ENCODE measurements at regions of chr3 and their contacts with region 1.

Region 1: DNA sequence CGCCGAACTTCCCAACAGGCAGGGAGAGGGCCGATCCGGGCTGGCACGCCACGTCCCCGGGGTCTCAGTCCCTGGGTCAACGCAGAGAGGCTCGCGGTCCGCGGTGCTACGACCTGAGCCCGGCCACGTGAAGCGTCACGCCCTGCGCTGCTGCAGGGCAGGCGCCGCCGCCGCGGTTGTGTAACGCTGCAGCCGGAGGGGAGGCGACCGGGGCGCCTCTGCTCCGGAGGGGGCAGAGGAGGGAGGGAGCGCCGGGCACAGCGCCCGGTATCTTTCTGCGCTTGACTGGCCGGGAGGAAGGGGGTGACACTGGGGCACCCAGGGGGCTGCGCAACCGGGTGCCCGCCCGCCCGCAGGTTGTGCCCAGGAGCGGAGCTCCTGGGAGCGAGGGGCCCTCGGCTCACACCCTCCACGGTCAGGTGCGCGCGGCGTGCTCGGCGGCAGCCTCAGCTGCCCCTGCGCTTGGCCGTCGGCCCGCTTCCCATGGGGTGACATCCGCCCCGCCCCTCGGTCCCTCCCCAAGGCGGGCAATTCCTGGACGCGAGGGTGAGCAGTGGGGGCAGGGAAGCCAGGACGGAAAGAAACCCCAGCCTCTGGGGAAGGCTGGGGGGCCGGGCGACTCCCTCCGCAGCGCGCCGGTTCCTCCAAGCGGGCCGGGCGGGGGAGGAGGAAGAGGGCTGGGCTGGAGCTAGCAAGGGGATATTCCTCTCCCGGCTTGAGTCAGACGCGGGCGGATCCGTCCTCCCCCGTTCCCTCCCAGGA is 852 bp upstream of the BHLHE40 start:
- DNase-seq: peak; percentile 99
- H3K4me3 ChIP-seq: peak overlapping the region; percentile 67 to 94 (median 82)
- H3K27ac ChIP-seq: peak overlapping the region; percentile 98 to 99 (median 98)
- H3K4me1 ChIP-seq: peaks cover 0 to 41% (median 37%) of the 10 kb centered on the region in 4 donors
- H3K27me3 ChIP-seq: no peaks in the 10 kb centered on the region
- CTCF ChIP-seq: no peak
- EP300 ChIP-seq: peak; percentile 38 to 94 (median 86)
- POLR2A ChIP-seq: peak; percentile 45 to 66

Region 2: DNA sequence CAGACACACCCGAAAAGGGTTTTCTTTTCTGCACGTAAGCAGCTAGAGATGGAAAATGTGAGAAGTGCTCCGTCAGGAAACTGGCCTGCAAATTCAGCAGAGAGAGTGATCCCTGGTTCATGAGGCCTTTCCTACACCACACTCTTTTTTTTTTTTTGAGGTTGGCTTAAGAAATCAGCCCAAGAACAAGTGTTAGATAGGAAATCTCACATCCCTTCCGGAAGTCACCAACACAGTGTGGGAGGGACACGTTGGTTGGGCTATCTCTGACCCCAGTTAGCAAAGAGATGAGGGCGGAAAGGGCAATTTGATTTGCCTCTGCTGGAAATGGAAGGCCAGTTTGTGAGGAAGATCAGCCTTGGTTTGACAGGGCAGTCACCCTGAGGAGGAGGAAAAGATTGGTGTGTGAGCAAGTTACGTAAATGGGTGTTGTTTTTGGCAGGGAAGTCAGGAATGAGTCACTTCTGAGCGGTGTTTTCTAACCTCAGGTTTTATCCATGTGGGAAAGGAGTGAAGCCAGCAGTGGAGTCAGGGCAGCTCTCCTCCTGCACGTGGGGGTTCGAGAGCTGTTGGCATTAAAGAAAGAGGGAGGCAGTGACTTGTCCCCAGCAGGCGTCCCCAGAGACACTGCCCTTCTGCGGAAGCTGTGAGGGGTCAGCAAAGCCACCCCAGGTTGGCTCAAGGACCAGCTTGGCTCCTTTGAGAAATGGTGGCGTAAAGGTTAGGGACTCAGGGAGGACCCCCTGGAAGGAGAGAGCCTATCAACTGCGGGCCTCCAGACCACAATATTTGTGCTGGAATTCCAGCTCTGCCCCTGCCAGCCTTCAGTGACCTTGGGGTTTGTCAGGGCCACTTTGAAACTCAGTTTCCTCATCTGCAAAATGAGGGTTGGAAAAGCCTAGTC is 236.7 kb before region 1 on chr3:
- intact Hi-C with region 1: loop called (anchors 5 kb)
- DNase-seq: peak; percentile 83
- H3K4me3 ChIP-seq: no peak overlapping the region
- H3K27ac ChIP-seq: peak overlapping the region; percentile 77 to 89 (median 84)
- H3K4me1 ChIP-seq: peaks cover 0 to 35% (median 22%) of the 10 kb centered on the region in 4 donors
- H3K27me3 ChIP-seq: no peaks in the 10 kb centered on the region
- CTCF ChIP-seq: no peak
- EP300 ChIP-seq: no peak
- POLR2A ChIP-seq: no peak

Region 3: GRCh38 chr3:4826237-4827100 is 151.9 kb before region 1 on chr3:
- intact Hi-C with region 1: loop called (anchors 2 kb)
- DNase-seq: peak; percentile 91
- H3K4me3 ChIP-seq: no peak overlapping the region
- H3K27ac ChIP-seq: peak overlapping the region; percentile 57 to 86 (median 76)
- H3K4me1 ChIP-seq: peaks cover 0 to 66% (median 47%) of the 10 kb centered on the region in 4 donors
- H3K27me3 ChIP-seq: no peaks in the 10 kb centered on the region
- CTCF ChIP-seq: no peak
- EP300 ChIP-seq: peak in 1 of 4 donors; percentile 75
- POLR2A ChIP-seq: peak in 1 of 2 donors; percentile 14

Region 4: GRCh38 chr3:4904811-4905695 is 73.3 kb before region 1 on chr3:
- intact Hi-C with region 1: loop called (anchors 2 kb)
- DNase-seq: no peak
- H3K4me3 ChIP-seq: no peak overlapping the region
- H3K27ac ChIP-seq: peak overlapping the region in 2 of 4 donors; percentile 77 to 81
- H3K4me1 ChIP-seq: peaks cover 0 to 38% (median 22%) of the 10 kb centered on the region in 4 donors
- H3K27me3 ChIP-seq: no peaks in the 10 kb centered on the region
- CTCF ChIP-seq: no peak
- EP300 ChIP-seq: no peak
- POLR2A ChIP-seq: no peak